AG04449 (cell line): ENCODE measurements at regions of chr16 and their contacts with region 1.

Region 1: DNA sequence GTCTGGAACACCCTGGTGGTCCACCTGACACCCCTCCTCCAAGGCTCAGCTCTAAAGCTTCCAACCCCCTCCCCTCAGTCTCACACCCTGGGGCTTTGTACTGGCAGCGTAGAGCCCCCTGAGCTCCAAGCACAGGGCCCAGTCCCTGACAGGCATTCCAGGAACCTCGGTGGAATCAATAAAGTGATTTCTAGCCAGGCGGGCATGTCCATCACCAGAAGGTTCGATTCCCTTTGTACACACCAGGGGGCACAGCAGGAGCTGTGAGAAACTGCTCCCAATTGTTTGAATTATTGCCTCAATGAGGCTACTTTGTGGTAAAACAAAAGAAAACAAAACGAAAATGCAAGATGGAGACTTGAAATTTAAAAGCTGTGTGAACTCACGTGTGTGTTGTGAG is 51.8 kb downstream of the SMPD3 start:
- DNase-seq: peak; percentile 9
- H3K4me3 ChIP-seq: no peak overlapping the region
- CTCF ChIP-seq: peak; percentile 60

Region 2: GRCh38 chr16:68382296-68382718 is 14.2 kb before region 1 on chr16:
- CTCF ChIA-PET with region 1: interaction called, 31 read pairs
- POLR2A ChIA-PET with region 1: no interaction called
- DNase-seq: no peak
- H3K4me3 ChIP-seq: no peak overlapping the region
- CTCF ChIP-seq: no peak

Region 3: GRCh38 chr16:68406451-68407152 is 10.1 kb after region 1 on chr16:
- CTCF ChIA-PET with region 1: interaction called, 83 read pairs
- POLR2A ChIA-PET with region 1: no interaction called
- DNase-seq: peak; percentile 12
- H3K4me3 ChIP-seq: peak overlapping the region; percentile 36
- CTCF ChIP-seq: no peak

Region 4: GRCh38 chr16:68417711-68418301 is 21.3 kb after region 1 on chr16:
- CTCF ChIA-PET with region 1: interaction called, 10 read pairs
- POLR2A ChIA-PET with region 1: no interaction called
- DNase-seq: no peak
- H3K4me3 ChIP-seq: no peak overlapping the region
- CTCF ChIP-seq: no peak

Region 5: DNA sequence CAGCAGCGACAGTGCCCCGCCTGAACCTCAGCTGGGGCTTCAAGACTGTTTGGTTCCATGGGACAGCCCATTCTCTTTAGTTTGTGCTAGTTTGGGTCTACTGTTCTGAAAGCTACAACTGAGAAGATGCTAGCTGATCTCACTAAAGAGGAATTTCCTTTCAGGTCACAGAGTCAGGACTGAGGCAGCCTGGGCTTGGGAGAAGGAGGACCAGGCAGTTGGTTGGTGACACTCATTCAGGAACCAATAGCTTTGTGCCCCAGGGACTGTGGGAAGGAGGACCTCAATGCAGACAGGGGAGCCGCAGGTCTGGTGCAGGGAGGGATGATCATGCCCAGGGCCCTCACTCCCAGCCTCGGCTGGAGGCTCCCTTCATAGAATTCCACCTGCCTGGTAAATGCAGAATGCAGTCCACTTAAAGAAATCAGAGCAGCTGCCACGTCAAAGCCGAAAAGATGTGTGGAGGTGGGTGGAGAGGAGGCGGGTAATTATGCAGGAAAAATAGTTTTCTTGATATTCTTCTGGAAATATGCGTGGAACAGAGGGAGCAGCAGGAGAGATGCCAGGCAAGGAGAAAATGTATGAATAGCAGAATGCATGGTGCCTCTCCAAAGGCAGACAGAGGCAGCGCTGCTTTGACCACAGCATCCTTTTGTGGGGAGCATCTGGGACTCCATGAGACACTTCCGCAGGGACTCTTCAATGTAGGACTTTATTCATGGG is 110.0 kb after region 1 on chr16:
- CTCF ChIA-PET with region 1: interaction called, 230 read pairs
- POLR2A ChIA-PET with region 1: no interaction called
- DNase-seq: no peak
- H3K4me3 ChIP-seq: no peak overlapping the region
- CTCF ChIP-seq: no peak

Region 6: GRCh38 chr16:68520649-68521086 is 124.2 kb after region 1 on chr16:
- CTCF ChIA-PET with region 1: interaction called, 21 read pairs
- POLR2A ChIA-PET with region 1: no interaction called
- DNase-seq: no peak
- H3K4me3 ChIP-seq: peak overlapping the region; percentile 50
- CTCF ChIP-seq: peak; percentile 98